ENCODE measurements at regions of chr13 and their contacts with region 1.

Region 1: GRCh38 chr13:112643759-112644459 is 45.9 kb upstream of the ATP11A start:
- DNase-seq: no peak
- CTCF ChIP-seq: no peak

Region 2: GRCh38 chr13:112587212-112587763 is 56.6 kb before region 1 on chr13:
- in situ Hi-C with region 1: no loop called
- DNase-seq: peak; percentile 88
- CTCF ChIP-seq: peak; percentile 39

Region 3: GRCh38 chr13:112873851-112874750 is 230.2 kb after region 1 on chr13:
- in situ Hi-C with region 1: loop called (anchors 10 kb)
- DNase-seq: peak; percentile 92
- CTCF ChIP-seq: peak; percentile 91

Measured in GM13976 (cell line).